ENCODE measurements at regions of chr1 and their contacts with region 1.

Region 1: DNA sequence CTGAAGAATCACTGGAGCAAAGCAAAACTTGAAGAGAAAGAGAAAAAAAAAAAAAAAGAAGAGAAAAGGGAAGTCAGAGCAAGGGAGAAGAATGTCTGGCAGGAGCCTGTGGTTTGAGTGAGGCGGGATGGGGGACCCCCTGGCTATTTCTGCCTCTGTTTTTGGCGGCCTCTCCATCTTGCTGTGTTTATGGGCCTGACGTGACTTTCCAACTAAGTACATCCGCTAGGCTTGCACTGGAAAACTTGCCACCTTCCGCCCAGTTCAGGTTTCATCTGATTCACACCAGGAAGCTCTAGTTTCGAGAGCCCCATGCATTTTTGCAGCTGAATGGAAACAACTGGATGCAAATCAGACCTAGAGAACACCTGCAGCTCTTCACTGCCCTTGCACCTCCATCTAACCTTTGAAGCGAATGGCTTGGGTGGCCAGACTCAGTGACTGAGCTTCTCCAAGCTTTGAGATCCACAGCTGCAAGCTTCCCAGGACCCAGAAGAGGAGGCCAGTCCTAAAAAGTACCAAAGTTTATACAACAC is 28.0 kb downstream of the TBX15 start:
- DNase-seq: peak; percentile 56 to 73
- ATAC-seq: peak; percentile 21 to 26
- H3K4me3 ChIP-seq: peak overlapping the region in 1 of 4 donors; percentile 28
- H3K27ac ChIP-seq: peak overlapping the region; percentile 85 to 96 (median 94)
- H3K4me1 ChIP-seq: peaks cover 72 to 74% of the 10 kb centered on the region in 2 donors
- H3K27me3 ChIP-seq: no peaks in the 10 kb centered on the region
- CTCF ChIP-seq: no peak
- POLR2A ChIP-seq: no peak

Region 2: DNA sequence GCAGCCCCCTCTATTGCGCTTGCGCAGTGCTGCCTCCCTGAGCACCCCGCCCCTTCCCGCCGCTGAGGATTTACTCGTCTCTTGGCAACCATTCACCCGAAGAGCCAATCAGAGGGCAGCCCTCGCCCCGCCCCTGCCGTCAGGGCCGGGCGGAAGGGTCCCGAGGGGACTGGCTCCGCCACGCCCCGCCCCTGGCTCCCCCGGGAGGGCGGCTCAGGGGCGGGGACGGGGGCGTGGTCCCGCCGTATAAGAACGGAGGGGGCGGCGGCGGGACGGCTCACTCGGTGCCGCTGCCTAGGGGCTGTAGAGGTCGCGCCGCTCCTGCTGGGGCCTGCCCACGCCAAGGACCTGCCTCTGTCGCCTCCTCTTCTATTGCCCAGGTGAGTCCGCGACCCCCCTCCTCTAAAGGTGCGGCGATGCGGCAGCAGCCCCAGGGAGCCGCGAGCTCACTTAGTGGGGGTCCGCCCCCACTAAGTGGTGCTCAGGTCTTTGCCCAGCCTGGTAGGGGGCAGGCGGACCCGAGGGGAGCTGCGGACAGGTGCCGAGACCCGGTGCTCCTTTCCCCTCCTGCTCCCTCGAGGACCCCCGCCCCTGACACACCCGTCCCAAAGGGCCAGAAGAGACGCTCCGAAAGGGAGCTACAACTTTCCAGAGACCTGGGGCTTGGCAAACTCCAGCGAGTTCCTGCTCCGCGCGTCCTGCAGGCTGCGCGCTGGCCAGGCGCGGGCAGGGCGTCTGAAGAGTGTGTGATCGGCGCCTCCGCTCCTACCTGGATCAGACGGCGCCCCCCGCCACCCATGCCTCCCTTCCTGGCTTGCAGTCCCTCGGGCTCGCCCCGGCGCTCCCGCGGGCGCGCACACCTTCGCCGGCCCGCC is 1354.1 kb before region 1 on chr1 and contains the start of gene TENT5C:
- in situ Hi-C with region 1: no loop called
- intact Hi-C with region 1: loop called (anchors 10 kb)
- DNase-seq: peak; percentile 96 to 98
- ATAC-seq: peak; percentile 81 to 83
- H3K4me3 ChIP-seq: peak within 1 kb of the TSS; percentile 67 to 98 (median 86)
- H3K27ac ChIP-seq: peak within 1 kb of the TSS; percentile 86 to 98 (median 96)
- H3K4me1 ChIP-seq: peaks cover 34 to 42% of the 10 kb centered on the region in 2 donors
- H3K27me3 ChIP-seq: no peaks in the 10 kb centered on the region
- CTCF ChIP-seq: peak in 3 of 5 experiments; percentile 3 to 21 (median 4)
- POLR2A ChIP-seq: peak; percentile 97 to 99
- total RNA-seq, gene TENT5C: 2.3 to 21.8 (median 6.4) TPM

Region 3: DNA sequence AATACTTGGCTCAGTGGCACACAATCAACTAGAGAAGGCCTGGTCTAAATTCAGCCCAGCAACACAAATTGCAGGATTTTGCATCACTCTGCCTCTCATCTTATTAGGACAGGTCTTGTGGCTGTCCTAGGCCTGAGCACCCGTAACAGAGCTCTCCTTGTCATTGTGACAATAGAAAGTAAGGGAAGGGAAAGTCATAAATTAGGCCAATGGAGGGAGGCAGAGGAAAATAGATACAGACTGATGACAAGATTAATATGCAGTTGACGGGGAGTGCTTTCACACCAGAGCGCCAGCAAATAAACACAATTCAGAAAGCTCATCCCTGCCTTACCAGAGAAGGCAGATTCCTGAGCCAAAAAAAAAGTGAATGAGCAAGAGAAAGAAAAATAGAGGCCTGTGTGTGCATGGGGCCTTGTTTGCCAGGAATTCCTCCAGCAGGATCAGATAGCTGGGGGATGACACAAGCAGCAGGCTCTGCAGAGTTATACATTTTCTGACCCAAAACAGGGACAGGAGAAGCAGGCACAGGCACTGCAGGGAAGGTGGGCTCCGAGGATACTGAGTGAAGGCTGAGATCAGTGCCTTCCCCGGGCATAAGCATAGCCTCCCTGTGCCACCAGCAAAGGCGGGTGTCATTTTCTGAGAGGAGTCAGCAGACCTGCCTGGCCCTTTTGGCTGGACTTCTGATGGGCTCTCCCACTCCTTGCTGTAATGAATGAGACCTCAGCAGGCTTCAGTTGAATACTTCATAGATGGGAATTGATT is 665.0 kb before region 1 on chr1:
- in situ Hi-C with region 1: loop called in 1 of 4 experiments (anchors 25 kb)
- intact Hi-C with region 1: loop called (anchors 2 kb)
- DNase-seq: peak; percentile 31 to 77
- ATAC-seq: peak; percentile 0 to 32
- H3K4me3 ChIP-seq: no peak overlapping the region
- H3K27ac ChIP-seq: peak overlapping the region; percentile 84 to 99 (median 89)
- H3K4me1 ChIP-seq: peaks cover 82% of the 10 kb centered on the region in 2 donors
- H3K27me3 ChIP-seq: no peaks in the 10 kb centered on the region
- CTCF ChIP-seq: no peak
- POLR2A ChIP-seq: no peak

Region 4: GRCh38 chr1:118304722-118305359 is 655.3 kb before region 1 on chr1:
- in situ Hi-C with region 1: no loop called
- intact Hi-C with region 1: loop called (anchors 1 kb)
- DNase-seq: peak in 1 of 2 donors; percentile 52
- ATAC-seq: peak; percentile 24 to 42
- H3K4me3 ChIP-seq: no peak overlapping the region
- H3K27ac ChIP-seq: peak overlapping the region; percentile 84 to 99 (median 89)
- H3K4me1 ChIP-seq: peaks cover 52 to 53% of the 10 kb centered on the region in 2 donors
- H3K27me3 ChIP-seq: no peaks in the 10 kb centered on the region
- CTCF ChIP-seq: peak; percentile 35 to 75 (median 60)
- POLR2A ChIP-seq: no peak

Region 5: GRCh38 chr1:118949315-118949714 is 10.8 kb before region 1 on chr1:
- in situ Hi-C with region 1: no loop called
- intact Hi-C with region 1: loop called (anchors 1 kb)
- DNase-seq: peak; percentile 83 to 87
- ATAC-seq: peak; percentile 50 to 72
- H3K4me3 ChIP-seq: no peak overlapping the region
- H3K27ac ChIP-seq: peak overlapping the region; percentile 83 to 93 (median 88)
- H3K4me1 ChIP-seq: peaks cover 92 to 97% of the 10 kb centered on the region in 2 donors
- H3K27me3 ChIP-seq: no peaks in the 10 kb centered on the region
- CTCF ChIP-seq: no peak
- POLR2A ChIP-seq: peak in 1 of 2 donors; percentile 31